AG04449 (cell line): ENCODE measurements at regions of chr5 and their contacts with region 1.

Region 1: DNA sequence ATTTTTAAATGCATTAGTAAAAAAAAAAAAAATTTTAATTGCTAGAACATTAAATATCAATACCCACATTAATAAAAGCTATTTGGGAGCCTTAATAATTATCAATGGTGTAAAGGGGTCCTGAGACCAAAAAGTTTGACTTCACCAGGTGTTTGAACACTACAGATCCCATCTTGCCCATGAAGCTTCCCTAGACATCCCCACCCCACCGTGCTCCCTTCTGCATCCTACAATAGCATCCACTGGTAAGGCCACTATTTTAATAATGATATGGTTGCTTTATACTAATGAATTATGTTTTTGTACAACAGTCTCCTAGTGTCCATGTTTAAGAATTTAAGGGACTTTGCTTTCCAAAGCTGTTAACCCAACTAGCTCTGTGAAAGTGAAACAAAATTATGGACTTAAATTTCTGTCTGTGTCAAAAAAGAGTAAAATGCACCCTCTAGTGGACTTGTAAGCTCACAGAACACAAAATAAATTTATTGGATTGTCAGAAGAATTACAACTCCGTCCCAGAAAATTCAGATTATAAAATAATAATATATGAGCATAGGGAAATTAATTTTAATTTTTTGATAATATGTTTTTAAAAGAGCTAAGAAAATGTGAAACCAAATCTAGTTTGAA is 76.0 kb downstream of the ARL15 start:
- DNase-seq: peak; percentile 29
- H3K4me3 ChIP-seq: no peak overlapping the region
- CTCF ChIP-seq: peak; percentile 42

Region 2: DNA sequence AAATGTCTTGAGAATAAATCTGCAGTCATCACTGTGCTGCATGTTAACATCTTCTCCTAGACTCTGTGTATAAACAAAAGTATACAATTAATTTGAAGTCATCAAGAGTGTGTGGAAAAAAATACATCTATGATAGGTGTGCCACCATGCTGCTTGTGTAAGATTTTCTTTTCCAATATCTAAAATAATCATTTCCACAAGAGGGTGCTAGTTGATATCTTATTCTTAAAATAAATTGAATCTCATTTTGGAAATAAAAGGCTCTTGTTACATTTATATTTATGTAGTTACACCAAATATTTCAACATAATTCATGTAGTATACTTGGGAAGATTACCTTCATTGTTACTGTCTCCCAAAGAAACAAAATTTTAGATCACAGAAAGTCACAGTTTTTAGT is 1110.7 kb before region 1 on chr5:
- CTCF ChIA-PET with region 1: interaction called, 48 read pairs
- POLR2A ChIA-PET with region 1: no interaction called
- DNase-seq: no peak
- H3K4me3 ChIP-seq: no peak overlapping the region
- CTCF ChIP-seq: no peak

Region 3: DNA sequence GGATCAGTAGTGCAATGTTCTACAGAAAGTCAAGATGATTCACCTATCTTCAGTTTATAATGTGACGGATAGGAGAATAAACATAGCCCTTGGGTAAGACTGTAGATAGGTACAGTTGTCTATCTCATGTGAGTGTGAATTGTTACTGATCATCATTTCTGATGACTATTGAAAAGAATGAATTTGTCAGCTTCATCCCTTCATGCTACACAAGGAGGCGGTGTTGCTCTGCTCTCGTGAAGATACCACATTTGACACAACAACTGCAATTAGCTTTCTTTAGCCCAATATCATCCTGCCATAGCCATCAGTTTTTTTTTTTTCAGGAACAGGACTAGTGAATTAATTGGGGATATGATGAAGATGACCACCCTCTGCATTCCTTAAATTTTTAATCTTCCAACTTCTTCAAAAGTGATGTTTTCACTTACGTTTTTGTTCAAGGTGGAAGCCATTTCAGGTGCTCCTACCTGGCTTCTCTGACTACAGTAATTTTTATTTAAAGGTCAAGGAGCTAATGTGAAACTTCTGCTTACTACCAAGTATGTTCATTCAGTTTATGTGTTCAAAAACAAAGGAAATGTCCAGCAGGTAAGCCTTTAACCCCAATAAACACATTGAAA is 972.0 kb before region 1 on chr5:
- CTCF ChIA-PET with region 1: interaction called, 22 read pairs
- POLR2A ChIA-PET with region 1: no interaction called
- DNase-seq: no peak
- H3K4me3 ChIP-seq: no peak overlapping the region
- CTCF ChIP-seq: peak; percentile 68

Region 4: GRCh38 chr5:53481887-53482716 is 752.3 kb before region 1 on chr5:
- CTCF ChIA-PET with region 1: interaction called, 26 read pairs
- POLR2A ChIA-PET with region 1: no interaction called
- DNase-seq: no peak
- H3K4me3 ChIP-seq: peak overlapping the region; percentile 97
- CTCF ChIP-seq: peak; percentile 21

Region 5: GRCh38 chr5:54021413-54022164 is 212.8 kb before region 1 on chr5:
- CTCF ChIA-PET with region 1: no interaction called
- POLR2A ChIA-PET with region 1: no interaction called
- DNase-seq: no peak
- H3K4me3 ChIP-seq: no peak overlapping the region
- CTCF ChIP-seq: no peak

Region 6: DNA sequence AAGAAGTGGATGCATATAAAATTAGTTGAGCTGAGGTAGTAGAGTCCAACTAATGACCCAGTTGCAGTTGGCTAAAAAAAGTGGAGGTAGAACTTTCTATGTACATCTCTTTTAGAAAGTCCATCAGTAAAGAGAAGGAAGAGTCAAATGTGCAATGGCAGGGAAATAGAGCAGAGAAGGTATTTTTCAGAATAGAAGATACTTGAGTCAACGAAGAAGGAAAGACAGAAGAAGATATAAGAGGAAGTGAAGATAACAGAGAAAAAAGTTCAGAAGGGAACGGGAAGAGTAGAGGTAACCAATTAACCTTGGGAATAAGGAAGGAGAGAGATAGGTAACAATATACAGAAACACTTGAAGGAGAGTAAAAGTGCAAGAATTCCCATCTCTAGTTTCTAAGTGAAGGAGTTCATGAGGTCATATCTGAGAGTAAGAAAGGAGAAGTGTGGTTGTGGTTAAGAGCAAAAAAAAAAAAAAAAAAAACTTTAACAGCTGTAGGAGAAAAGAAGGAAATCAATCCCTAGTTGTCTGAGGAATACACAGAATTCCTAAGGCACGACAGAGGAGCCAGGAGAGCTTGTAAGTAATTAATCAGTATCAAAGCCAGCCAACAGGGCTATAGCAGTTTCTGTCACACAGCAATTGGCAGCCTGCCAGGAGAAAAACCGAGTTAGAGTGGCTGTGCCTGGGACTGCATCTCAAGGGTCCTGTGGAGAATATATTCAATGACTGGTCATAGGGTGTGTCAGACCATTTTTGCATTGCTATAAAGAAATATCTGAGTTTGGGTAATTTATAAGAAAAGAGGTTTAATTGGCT is 15.0 kb after region 1 on chr5:
- CTCF ChIA-PET with region 1: interaction called, 27 read pairs
- POLR2A ChIA-PET with region 1: no interaction called
- DNase-seq: no peak
- H3K4me3 ChIP-seq: no peak overlapping the region
- CTCF ChIP-seq: no peak

Region 7: GRCh38 chr5:54379590-54379989 is 145.2 kb after region 1 on chr5:
- CTCF ChIA-PET with region 1: no interaction called
- POLR2A ChIA-PET with region 1: no interaction called
- DNase-seq: no peak
- H3K4me3 ChIP-seq: no peak overlapping the region
- CTCF ChIP-seq: no peak